ENCODE measurements at regions of chr13 and their contacts with region 1.

Region 1: GRCh38 chr13:59542303-59542702 is 621.4 kb downstream of the DIAPH3 start:
- DNase-seq: peak; percentile 95
- H3K4me3 ChIP-seq: no peak overlapping the region
- H3K27ac ChIP-seq: peak overlapping the region; percentile 92
- H3K4me1 ChIP-seq: peaks cover 53% of the 10 kb centered on the region
- H3K27me3 ChIP-seq: no peaks in the 10 kb centered on the region
- CTCF ChIP-seq: no peak

Region 2: DNA sequence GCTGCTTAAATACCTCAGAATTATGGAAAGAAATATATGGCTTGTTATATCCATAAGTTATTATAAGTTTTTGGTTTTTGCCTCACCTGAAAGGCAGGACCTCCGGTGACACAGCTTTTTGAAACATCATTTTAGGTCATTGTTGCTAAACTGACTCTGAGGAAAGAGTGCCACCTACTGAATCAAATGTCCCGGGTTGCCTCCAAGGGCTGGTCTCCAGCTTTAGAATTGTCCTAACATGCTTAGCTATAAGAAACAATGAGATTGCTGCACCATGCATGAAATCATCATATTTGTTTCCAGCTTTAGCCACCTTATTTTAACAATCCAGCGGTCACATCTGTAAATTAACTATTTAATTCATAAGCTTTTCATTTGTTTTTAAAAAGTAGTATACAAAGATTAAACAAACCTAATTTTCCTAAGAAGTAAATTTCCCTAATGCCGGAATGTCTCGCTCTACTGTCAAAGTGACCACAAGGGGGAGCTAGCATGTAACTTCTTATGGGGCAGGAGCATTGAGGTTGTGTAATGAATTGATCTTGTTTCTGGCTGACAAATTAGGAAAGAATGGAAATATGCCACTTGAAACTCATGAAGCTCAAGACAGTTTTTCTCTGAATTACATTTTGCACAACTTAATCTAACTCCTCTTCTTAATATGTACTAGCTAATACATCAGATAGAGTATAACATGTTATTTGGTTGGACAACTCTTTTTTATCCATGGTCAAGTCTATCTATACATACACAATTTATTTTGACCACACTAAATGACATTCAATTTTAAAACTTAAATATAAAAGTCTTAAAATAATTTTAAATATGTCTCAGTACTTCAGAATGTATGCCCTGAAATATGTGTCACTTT is 1917.5 kb before region 1 on chr13:
- CTCF ChIA-PET with region 1: no interaction called
- POLR2A ChIA-PET with region 1: no interaction called
- intact Hi-C with region 1: loop called (anchors 5 kb)
- DNase-seq: peak; percentile 87
- H3K4me3 ChIP-seq: no peak overlapping the region
- H3K27ac ChIP-seq: no peak overlapping the region
- H3K4me1 ChIP-seq: peaks cover 22% of the 10 kb centered on the region
- H3K27me3 ChIP-seq: no peaks in the 10 kb centered on the region
- CTCF ChIP-seq: peak; percentile 93

Region 3: DNA sequence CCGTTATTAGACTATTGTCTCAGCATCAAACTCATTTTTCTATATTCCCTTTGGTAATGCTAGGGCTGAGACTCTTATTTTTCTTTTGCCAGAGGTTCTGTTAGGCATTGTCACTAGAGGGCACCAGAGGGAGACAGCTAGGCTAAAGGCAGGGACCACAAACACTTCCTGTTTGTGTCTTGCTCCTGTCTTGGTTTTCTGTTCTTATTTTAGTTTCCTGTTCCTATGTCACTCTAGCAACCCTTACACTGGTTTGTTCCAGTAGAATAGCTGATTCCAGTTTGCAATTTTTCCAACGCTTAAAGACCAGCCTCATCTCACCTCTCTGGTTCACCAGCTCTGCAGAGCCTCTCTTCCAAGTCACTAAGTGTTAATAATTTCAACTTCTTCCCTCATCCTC is 150.6 kb before region 1 on chr13:
- CTCF ChIA-PET with region 1: no interaction called
- POLR2A ChIA-PET with region 1: no interaction called
- intact Hi-C with region 1: loop called (anchors 1 kb)
- DNase-seq: peak; percentile 91
- H3K4me3 ChIP-seq: no peak overlapping the region
- H3K27ac ChIP-seq: peak overlapping the region; percentile 58
- H3K4me1 ChIP-seq: peaks cover 23% of the 10 kb centered on the region
- H3K27me3 ChIP-seq: no peaks in the 10 kb centered on the region
- CTCF ChIP-seq: peak; percentile 93

Region 4: DNA sequence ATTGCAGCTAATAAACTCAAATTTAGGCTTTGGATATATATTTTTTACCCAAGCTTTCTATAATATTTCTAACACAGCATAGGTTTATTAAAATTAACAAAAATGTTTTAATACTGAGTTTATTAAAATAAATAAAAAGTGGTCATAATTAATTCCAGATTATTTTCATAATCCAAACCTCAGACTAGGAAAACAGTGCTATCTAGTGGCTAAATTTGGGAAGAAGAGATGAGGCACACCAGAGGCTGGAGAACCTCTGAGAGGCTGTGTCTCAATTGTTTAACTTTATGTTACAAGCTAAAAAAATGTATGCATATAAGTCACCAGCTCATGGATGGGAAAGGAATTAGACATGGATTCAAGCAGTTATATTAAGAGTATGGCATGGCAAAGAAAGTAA is 229.0 kb after region 1 on chr13:
- CTCF ChIA-PET with region 1: no interaction called
- POLR2A ChIA-PET with region 1: no interaction called
- intact Hi-C with region 1: loop called (anchors 1 kb)
- DNase-seq: peak; percentile 73
- H3K4me3 ChIP-seq: no peak overlapping the region
- H3K27ac ChIP-seq: peak overlapping the region; percentile 70
- H3K4me1 ChIP-seq: peaks cover 83% of the 10 kb centered on the region
- H3K27me3 ChIP-seq: no peaks in the 10 kb centered on the region
- CTCF ChIP-seq: peak; percentile 80

Region 5: GRCh38 chr13:59946944-59947343 is 404.6 kb after region 1 on chr13:
- CTCF ChIA-PET with region 1: no interaction called
- POLR2A ChIA-PET with region 1: interaction called, 6 read pairs
- intact Hi-C with region 1: loop called (anchors 2 kb)
- DNase-seq: peak; percentile 78
- H3K4me3 ChIP-seq: no peak overlapping the region
- H3K27ac ChIP-seq: peak overlapping the region; percentile 86
- H3K4me1 ChIP-seq: peaks cover 60% of the 10 kb centered on the region
- H3K27me3 ChIP-seq: no peaks in the 10 kb centered on the region
- CTCF ChIP-seq: no peak

Region 6: GRCh38 chr13:60431108-60431700 is 888.9 kb after region 1 on chr13:
- CTCF ChIA-PET with region 1: no interaction called
- POLR2A ChIA-PET with region 1: no interaction called
- intact Hi-C with region 1: loop called (anchors 5 kb)
- DNase-seq: peak; percentile 87
- H3K4me3 ChIP-seq: no peak overlapping the region
- H3K27ac ChIP-seq: peak overlapping the region; percentile 35
- H3K4me1 ChIP-seq: peaks cover 36% of the 10 kb centered on the region
- H3K27me3 ChIP-seq: no peaks in the 10 kb centered on the region
- CTCF ChIP-seq: peak; percentile 86

Measured in A673 (cell line).